GM12878 (cell line): ENCODE measurements at regions of chr13 and their contacts with region 1.

Region 1: DNA sequence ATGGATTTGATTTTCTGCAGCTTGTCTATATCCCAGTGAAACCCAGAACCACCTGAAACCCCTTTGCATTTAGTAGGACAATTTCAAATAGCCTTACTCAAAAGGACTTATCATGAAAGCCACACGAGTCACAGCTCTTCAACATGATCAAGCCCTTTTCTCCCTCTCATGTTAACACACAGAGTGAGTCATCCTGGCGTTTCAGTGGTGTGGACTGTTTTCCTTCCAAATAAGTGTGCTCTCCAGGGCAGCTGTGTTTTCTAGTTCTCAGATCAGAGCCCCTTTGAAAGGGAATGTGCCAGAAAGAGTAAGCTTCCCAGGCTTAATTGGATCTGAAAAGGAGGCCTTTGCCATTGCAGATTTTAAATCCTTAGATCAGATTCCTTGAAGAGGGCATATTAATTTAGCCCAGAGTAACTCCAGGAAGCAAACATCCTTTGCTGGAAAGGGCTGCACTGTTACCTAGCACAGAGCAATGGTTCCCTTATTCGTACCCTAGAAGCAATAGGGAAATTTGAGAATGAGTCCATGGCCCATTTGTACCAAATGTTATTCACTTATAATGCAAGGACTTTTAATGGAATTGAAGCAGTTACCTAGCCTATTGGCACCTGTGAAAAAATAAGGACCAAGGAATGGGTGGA is 51.3 kb downstream of the ERICH6B start:
- DNase-seq: no peak
- ATAC-seq: no peak
- H3K4me3 ChIP-seq: no peak overlapping the region
- H3K27ac ChIP-seq: no peak overlapping the region
- H3K4me1 ChIP-seq: no peaks in the 10 kb centered on the region
- H3K27me3 ChIP-seq: no peaks in the 10 kb centered on the region; a peak in 1 of 4 replicates
- CTCF ChIP-seq: no peak
- EP300 ChIP-seq: no peak
- POLR2A ChIP-seq: no peak
- RAD21 ChIP-seq: no peak

Region 2: GRCh38 chr13:45582408-45583076 is 18.3 kb after region 1 on chr13:
- CTCF ChIA-PET with region 1: no interaction called
- POLR2A ChIA-PET with region 1: no interaction called
- RAD21 ChIA-PET with region 1: no interaction called
- SMC1A ChIA-PET with region 1: no interaction called
- in situ Hi-C with region 1: no loop called
- intact Hi-C with region 1: no loop called
- DNase-seq: no peak
- ATAC-seq: no peak
- H3K4me3 ChIP-seq: no peak overlapping the region
- H3K27ac ChIP-seq: no peak overlapping the region
- H3K4me1 ChIP-seq: no peaks in the 10 kb centered on the region
- H3K27me3 ChIP-seq: no peaks in the 10 kb centered on the region; a peak in 1 of 4 replicates
- CTCF ChIP-seq: no peak
- EP300 ChIP-seq: no peak
- POLR2A ChIP-seq: no peak
- RAD21 ChIP-seq: no peak

Region 3: GRCh38 chr13:45615501-45616101 is 51.3 kb after region 1 on chr13 and contains the start of gene ERICH6B:
- CTCF ChIA-PET with region 1: no interaction called
- POLR2A ChIA-PET with region 1: no interaction called
- RAD21 ChIA-PET with region 1: no interaction called
- SMC1A ChIA-PET with region 1: no interaction called
- in situ Hi-C with region 1: loop called (anchors 5 kb)
- intact Hi-C with region 1: no loop called
- DNase-seq: no peak
- ATAC-seq: no peak
- H3K4me3 ChIP-seq: no peak within 1 kb of the TSS
- H3K27ac ChIP-seq: no peak within 1 kb of the TSS
- H3K4me1 ChIP-seq: no peaks in the 10 kb centered on the region
- H3K27me3 ChIP-seq: peaks cover 0 to 8% of the 10 kb centered on the region in 2 experiments; a peak in 2 of 4 replicates
- CTCF ChIP-seq: no peak
- EP300 ChIP-seq: no peak
- POLR2A ChIP-seq: no peak
- RAD21 ChIP-seq: no peak
- polyA plus RNA-seq, gene ERICH6B: 0.27 TPM in 1 of 2 experiments, not detected in the other